Heart left ventricle (tissue), 16 donors: ENCODE measurements at regions of chr12 and their contacts with region 1.

Region 1: GRCh38 chr12:6978609-6979011 is 7.9 kb downstream of the EMG1 start:
- DNase-seq: peak in 1 of 5 donors; percentile 19
- ATAC-seq: peak; percentile 29 to 64 (median 40)
- H3K4me3 ChIP-seq: no peak overlapping the region
- H3K27ac ChIP-seq: peak overlapping the region in 11 of 12 donors; percentile 37 to 83 (median 55)
- H3K4me1 ChIP-seq: peaks cover 0 to 17% (median 0%) of the 10 kb centered on the region in 12 donors
- H3K27me3 ChIP-seq: no peaks in the 10 kb centered on the region
- CTCF ChIP-seq: no peak
- POLR2A ChIP-seq: no peak

Region 2: DNA sequence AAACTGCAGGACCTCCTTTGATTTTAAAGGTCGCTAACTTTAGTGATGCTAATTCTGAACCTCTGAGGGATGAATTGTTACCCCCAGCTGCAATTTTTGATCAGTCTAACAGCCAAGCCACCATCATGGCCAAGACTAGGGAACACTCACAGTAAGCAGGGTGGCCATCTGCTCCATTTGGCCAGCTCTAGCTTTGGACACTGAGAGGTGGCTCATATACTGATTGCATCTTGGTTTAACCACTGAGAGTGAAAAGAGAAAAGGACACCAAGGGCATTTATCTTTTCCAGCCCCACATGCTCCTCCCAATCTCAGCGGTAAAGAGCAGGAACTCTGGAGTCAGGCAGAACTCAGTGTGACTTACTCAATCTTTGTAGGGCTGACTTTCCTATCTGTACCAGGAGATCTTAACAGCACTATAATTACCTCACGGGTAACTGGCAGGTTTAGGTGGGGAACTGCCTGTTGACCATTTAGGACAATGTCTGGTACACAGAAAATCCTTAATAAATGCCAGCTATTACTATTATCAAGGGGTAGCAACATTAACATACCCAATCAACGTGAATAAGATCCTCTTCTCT is 33.5 kb after region 1 on chr12:
- intact Hi-C with region 1: loop called in 3 of 10 experiments (anchors 5 kb)
- DNase-seq: no peak
- ATAC-seq: peak in 3 of 4 donors; percentile 19 to 69 (median 43)
- H3K4me3 ChIP-seq: no peak overlapping the region
- H3K27ac ChIP-seq: peak overlapping the region in 4 of 12 donors; percentile 1 to 41 (median 22)
- H3K4me1 ChIP-seq: peaks cover 0 to 62% (median 12%) of the 10 kb centered on the region in 12 donors
- H3K27me3 ChIP-seq: no peaks in the 10 kb centered on the region
- CTCF ChIP-seq: no peak
- POLR2A ChIP-seq: no peak

Region 3: DNA sequence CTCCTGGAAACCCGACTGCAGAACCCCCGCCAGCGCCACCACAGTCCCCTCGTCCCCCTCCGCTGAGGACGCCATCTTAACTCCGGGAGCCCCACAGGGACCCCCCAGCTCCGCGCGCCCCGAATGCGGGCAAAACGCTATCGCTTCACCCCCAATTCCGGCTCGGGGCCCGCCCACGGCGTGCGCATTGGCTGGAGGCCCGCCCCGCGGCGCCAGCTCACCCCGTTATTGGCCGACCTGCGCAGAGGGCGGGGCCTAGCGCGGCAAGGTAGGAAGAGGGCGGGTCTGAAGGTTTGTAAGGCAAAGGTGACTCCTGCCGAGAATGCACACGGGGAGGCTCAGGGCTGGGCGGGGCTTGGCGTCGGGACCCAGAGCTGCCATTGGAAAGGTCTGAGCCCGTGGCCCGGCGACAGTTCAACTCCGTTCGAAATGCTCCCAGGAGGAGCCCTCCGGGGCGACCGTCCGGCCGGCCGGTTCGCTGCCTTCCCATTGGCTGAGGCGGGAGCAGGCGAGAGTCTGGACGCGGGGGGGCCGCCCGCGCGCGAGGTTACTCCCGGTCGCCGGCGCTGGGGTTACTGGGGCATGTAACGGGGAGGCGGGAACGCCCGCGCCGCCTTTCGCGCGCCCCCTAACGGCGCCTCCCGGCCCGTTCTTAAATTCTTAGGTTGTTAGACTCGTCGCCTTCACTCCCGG is 39.9 kb after region 1 on chr12 and contains the start of gene LPCAT3:
- intact Hi-C with region 1: loop called in 4 of 10 experiments (anchors 2 to 5 kb)
- DNase-seq: peak; percentile 97 to 99 (median 98)
- ATAC-seq: peak; percentile 96 to 97 (median 96)
- H3K4me3 ChIP-seq: peak within 1 kb of the TSS; percentile 53 to 96 (median 78)
- H3K27ac ChIP-seq: peak within 1 kb of the TSS; percentile 48 to 96 (median 94)
- H3K4me1 ChIP-seq: peaks cover 0 to 38% (median 19%) of the 10 kb centered on the region in 12 donors
- H3K27me3 ChIP-seq: no peaks in the 10 kb centered on the region
- CTCF ChIP-seq: peak; percentile 84 to 96 (median 91)
- POLR2A ChIP-seq: peak in 1 of 2 donors; percentile 76
- total RNA-seq, gene LPCAT3: 19.9 to 66.3 (median 46.8) TPM